MCF 10A (cell line): ENCODE measurements at regions of chr1 and their contacts with region 1.

Region 1: DNA sequence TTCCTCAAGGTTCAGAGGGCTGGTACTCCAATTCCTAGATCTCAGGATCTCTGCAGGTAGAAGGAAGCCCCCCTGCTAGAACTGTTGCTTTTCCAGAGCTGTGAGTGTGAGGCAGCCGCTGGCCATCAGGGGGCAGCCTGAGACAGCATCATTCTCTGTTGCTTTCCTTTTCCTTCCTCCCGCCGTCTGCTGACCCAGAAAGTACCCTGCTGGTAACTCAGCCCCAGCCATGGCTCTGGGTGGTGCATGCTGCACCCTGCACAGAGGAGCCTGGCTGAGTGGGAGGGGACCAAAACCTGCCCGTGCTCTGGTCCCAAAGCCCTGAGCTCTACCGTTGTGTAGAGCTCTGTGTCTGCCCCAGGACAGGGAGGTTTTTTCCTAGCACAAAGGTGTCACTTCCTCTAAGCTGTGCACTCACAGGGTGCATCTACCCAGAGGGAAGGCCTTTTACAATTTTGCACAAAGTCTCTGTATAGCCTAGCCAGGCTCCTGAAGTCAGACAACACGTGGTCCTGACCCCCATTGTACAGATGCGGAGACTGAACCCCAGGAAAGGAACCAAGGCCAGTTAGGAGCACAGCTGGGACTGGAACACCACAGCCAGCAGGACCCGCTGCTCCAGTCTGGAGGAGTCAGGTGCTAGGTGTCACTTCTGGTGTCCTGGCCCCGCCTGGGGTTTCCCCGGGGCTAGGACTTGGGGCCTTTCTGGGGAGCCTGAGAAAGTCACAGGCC is 5.6 kb upstream of the FAM131C start:
- DNase-seq: peak; percentile 77
- H3K4me3 Mint-ChIP-seq: no peak overlapping the region
- H3K27ac Mint-ChIP-seq: no peak overlapping the region
- H3K4me1 Mint-ChIP-seq: peaks cover 39% of the 10 kb centered on the region
- H3K27me3 Mint-ChIP-seq: no peaks in the 10 kb centered on the region
- CTCF ChIP-seq: peak; percentile 93

Region 2: GRCh38 chr1:16101623-16102022 is 22.5 kb after region 1 on chr1:
- CTCF ChIA-PET with region 1: interaction called, 13 read pairs
- POLR2A ChIA-PET with region 1: interaction called, 4 read pairs
- intact Hi-C with region 1: no loop called
- DNase-seq: no peak
- H3K4me3 Mint-ChIP-seq: no peak overlapping the region
- H3K27ac Mint-ChIP-seq: no peak overlapping the region
- H3K4me1 Mint-ChIP-seq: no peaks in the 10 kb centered on the region
- H3K27me3 Mint-ChIP-seq: peaks cover 4% of the 10 kb centered on the region
- CTCF ChIP-seq: no peak

Region 3: DNA sequence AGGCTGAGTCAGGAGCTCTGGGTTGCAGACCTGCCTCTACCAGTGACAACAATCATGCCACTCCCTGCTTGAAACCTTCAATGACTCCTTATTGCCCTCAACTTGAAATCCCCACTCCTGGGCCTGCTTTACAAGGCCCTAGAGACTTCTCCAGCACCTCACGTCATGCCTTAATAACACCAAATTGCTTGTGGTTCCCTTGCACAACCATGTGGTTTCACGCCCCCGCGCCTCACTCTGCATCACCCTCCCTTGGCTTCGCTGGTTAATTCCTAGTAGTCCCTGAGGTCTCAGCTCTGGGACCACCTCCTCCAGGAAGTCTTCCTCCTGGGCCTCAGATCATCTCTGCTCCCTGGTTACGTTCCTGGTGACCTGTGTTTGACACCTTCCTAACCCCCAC is 43.8 kb after region 1 on chr1:
- CTCF ChIA-PET with region 1: interaction called, 13 read pairs
- POLR2A ChIA-PET with region 1: interaction called, 5 read pairs
- intact Hi-C with region 1: loop called (anchors 5 kb)
- DNase-seq: peak; percentile 96
- H3K4me3 Mint-ChIP-seq: no peak overlapping the region
- H3K27ac Mint-ChIP-seq: peak overlapping the region; percentile 67
- H3K4me1 Mint-ChIP-seq: peaks cover 32% of the 10 kb centered on the region
- H3K27me3 Mint-ChIP-seq: no peaks in the 10 kb centered on the region
- CTCF ChIP-seq: no peak

Region 4: GRCh38 chr1:16146279-16147155 is 67.4 kb after region 1 on chr1:
- CTCF ChIA-PET with region 1: interaction called, 156 read pairs
- POLR2A ChIA-PET with region 1: interaction called, 9 read pairs
- intact Hi-C with region 1: loop called (anchors 2 kb)
- DNase-seq: peak; percentile 80
- H3K4me3 Mint-ChIP-seq: peak overlapping the region; percentile 69
- H3K27ac Mint-ChIP-seq: peak overlapping the region; percentile 53
- H3K4me1 Mint-ChIP-seq: peaks cover 57% of the 10 kb centered on the region
- H3K27me3 Mint-ChIP-seq: no peaks in the 10 kb centered on the region
- CTCF ChIP-seq: no peak

Region 5: DNA sequence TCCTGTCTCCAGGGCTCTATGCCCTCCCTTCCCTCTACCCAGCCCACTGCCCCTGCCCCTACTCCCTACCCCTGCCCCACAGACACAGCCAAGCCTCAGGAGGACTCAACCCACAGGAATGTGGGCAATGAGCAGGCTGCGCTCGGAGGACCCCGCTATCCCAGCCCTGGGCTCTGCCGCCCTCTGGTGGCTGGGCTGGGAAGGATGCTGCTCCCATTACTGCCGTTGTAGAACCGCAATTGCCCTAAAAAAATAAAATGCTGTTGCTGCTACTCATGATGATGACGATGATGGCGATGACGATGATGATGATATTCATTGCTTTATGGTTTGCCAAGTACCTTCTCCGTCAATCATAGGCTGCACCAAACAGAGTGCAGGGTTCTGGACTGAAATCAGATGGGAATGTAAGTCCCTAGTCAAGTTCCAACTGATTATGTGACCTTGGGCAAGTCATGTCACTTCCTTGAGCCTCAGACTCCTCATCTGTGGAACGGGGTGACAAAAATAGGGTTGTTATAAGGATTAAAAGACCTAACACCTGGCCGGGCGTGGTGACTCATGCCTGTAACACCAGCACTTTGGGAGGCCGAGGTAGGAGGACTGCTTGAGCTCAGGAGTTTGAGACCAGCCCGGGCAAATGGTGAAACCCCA is 108.8 kb after region 1 on chr1:
- CTCF ChIA-PET with region 1: interaction called, 373 read pairs
- POLR2A ChIA-PET with region 1: interaction called, 112 read pairs
- intact Hi-C with region 1: loop called (anchors 1 kb)
- DNase-seq: peak; percentile 82
- H3K4me3 Mint-ChIP-seq: no peak overlapping the region
- H3K27ac Mint-ChIP-seq: no peak overlapping the region
- H3K4me1 Mint-ChIP-seq: peaks cover 38% of the 10 kb centered on the region
- H3K27me3 Mint-ChIP-seq: no peaks in the 10 kb centered on the region
- CTCF ChIP-seq: peak; percentile 98

Region 6: DNA sequence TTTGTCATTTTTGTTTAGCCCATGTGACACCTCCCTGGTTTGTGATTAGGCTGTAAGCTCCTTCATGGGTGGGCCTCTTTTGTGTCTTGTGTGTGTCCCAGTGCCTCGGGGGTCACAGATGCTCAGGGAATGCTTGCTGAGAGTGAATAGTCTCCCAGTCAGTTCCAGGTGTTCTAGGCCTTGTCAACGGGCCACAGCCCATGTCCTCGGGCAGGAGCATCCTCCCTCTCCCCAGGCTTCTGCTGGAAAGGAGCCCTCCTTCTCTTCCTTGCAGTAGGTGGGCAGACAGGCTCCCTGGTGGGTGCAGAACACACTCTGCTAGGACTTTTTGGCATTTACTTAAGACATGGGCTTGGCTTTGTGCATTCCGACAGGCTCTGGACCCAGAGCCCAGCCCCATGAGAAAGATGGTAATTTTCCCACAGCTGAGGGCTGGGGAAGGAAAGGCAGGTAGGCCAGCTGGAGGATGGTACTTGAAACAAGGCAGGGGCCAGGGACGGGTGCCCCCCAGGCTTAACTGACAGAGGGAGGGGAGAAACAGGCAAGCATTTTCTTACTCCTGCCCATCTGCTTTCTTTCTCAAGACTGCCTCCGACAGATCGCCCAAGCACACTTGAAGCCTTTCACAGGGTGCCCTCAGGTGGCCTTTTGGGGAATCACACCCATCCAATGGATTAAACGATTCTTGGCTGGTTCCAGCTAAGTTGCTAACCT is 165.0 kb after region 1 on chr1:
- CTCF ChIA-PET with region 1: interaction called, 79 read pairs
- POLR2A ChIA-PET with region 1: interaction called, 12 read pairs
- intact Hi-C with region 1: loop called (anchors 1 kb)
- DNase-seq: peak; percentile 85
- H3K4me3 Mint-ChIP-seq: no peak overlapping the region
- H3K27ac Mint-ChIP-seq: peak overlapping the region; percentile 27
- H3K4me1 Mint-ChIP-seq: peaks cover 17% of the 10 kb centered on the region
- H3K27me3 Mint-ChIP-seq: no peaks in the 10 kb centered on the region
- CTCF ChIP-seq: peak; percentile 77

Region 7: DNA sequence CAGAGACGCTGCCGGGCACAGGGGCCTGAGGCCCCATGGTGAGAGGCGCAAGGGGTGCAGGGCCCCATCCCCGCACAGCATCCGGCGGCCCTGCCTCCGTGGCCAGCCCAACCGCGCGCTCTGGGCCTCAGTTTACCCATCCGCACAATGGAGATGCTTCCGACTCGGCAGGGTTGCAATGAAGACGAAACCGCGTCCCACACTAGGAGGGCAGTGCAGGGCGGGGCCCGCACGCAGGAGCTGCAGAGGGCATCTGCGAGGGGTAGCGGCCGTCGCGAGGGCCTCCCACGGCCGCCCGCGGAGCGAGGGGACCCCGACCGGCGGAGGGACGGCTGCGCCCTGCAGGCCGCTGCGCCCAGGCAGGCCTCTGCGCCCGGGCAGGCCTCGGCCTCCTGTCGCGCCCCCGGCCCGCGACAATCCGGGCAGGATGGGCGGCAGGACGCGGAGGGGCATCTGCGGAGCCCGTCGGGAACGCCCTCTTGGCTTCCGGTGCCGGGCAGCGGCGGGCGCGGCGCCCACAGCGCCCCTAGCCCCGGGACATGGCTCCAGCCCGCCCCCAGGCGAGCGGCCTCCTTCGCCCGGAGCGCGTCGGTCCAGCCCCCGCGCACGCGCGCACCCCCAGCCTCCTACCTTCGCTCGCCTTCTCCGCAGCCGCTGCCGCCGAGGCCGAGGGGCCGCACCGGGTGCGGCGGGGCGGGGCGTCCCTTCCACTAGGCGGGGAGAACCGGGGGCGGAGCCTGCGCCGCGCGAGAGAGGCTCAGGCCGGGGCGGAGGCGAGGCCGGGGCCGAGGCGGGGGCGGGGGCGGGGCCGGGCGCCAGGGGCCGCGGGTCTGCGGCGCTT is 419.7 kb after region 1 on chr1:
- CTCF ChIA-PET with region 1: no interaction called
- POLR2A ChIA-PET with region 1: no interaction called
- intact Hi-C with region 1: loop called (anchors 5 kb)
- DNase-seq: peak; percentile 73
- H3K4me3 Mint-ChIP-seq: peak overlapping the region; percentile 74
- H3K27ac Mint-ChIP-seq: no peak overlapping the region
- H3K4me1 Mint-ChIP-seq: peaks cover 6% of the 10 kb centered on the region
- H3K27me3 Mint-ChIP-seq: no peaks in the 10 kb centered on the region
- CTCF ChIP-seq: no peak